Panc1 (cell line): ENCODE measurements at regions of chr10 and their contacts with region 1.

Region 1: GRCh38 chr10:102450194-102450938 is 977 bp downstream of the C10orf95 start:
- DNase-seq: no peak
- ATAC-seq: peak; percentile 92
- H3K4me3 ChIP-seq: peak overlapping the region; percentile 69 to 94
- H3K27ac ChIP-seq: peak overlapping the region; percentile 84
- H3K4me1 ChIP-seq: peaks cover 14% of the 10 kb centered on the region; the same call in 1 of the 2 replicates
- H3K27me3 ChIP-seq: no peaks in the 10 kb centered on the region
- CTCF ChIP-seq: no peak

Region 2: DNA sequence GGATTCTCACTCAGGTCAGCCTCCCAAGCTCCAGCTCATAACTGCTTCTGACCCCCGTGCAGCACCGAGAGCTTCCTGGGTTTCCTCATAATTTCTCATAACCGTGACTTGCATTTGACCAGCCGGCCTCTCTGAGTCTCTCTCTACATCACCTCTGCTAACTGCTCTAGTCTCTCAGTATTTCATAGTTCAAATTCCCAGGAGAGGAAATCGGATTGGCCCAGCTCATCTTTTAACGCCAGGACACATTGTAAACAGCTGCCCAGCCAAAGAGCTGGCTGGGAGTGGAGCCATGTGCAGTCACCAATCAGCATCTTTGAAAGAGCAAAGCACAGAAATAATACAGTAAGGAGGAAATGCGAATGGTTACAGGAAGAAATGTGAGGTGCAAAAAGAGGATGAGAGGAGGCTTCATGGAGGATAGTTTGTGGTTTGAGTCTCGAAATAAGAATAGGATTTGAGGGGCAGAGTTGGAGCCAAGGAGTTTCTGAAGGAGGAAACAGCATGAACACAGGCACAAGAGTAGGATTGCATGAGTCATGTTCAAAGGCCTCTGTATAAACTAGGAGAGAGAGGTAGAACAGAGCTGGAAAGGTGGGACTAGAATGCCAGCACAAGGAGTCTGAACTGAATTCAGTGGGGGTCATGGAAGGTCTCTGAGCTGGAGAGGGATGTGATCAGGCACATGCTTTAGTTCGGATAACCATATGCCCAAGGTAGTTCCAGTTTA is 1205.9 kb before region 1 on chr10:
- CTCF ChIA-PET with region 1: interaction called, 10 read pairs
- POLR2A ChIA-PET with region 1: no interaction called
- in situ Hi-C with region 1: no loop called
- intact Hi-C with region 1: no loop called
- DNase-seq: no peak
- ATAC-seq: no peak
- H3K4me3 ChIP-seq: no peak overlapping the region
- H3K27ac ChIP-seq: no peak overlapping the region
- H3K4me1 ChIP-seq: no peaks in the 10 kb centered on the region
- H3K27me3 ChIP-seq: peaks cover 12% of the 10 kb centered on the region
- CTCF ChIP-seq: no peak

Region 3: GRCh38 chr10:102437515-102437914 is 12.9 kb before region 1 on chr10:
- CTCF ChIA-PET with region 1: interaction called, 11 read pairs
- POLR2A ChIA-PET with region 1: interaction called, 5 read pairs
- in situ Hi-C with region 1: no loop called
- intact Hi-C with region 1: no loop called
- DNase-seq: no peak
- ATAC-seq: no peak
- H3K4me3 ChIP-seq: no peak overlapping the region
- H3K27ac ChIP-seq: no peak overlapping the region
- H3K4me1 ChIP-seq: peaks cover 11% of the 10 kb centered on the region
- H3K27me3 ChIP-seq: no peaks in the 10 kb centered on the region
- CTCF ChIP-seq: no peak